ENCODE measurements at regions of chr2 and their contacts with region 1.

Region 1: GRCh38 chr2:231104115-231104713 is 20.6 kb downstream of the HTR2B start:
- DNase-seq: no peak

Region 2: DNA sequence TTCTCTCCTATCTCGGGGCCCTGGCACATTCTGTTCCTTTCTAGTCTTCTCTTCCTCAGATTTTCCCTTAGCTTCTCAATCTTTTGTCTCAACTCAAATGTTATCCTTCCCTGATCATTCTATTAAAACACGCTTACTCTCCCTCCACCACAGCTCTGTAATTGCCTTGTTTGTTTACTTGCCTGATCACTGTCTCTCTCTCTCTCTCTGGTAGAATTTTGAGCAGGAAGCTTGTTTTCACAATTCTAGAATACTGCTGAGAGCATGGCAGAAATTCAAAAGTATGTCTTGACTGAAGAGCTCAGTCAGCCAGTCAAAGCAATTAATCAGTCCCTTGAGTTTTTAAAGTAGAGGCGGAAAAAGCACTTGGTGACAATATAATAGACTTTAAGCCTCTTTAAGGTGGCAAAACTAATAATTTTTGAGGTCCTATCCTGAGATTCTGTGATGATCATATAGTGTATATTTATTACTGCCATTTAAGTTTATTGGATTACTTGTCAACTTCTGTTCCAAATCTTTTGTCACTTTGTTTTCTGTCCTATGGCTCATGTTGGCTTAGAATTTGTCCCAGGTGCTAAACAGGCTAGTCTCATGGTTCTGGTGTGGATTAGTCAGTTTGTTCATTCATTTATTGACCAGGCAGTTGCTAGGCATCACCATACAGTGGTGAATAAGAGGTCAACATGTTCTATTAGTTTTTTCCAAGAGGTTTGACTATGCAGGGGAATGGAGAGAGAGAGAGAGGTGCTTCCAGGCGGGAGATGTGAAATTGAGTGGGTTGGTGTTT is 45.3 kb before region 1 on chr2:
- intact Hi-C with region 1: no loop called
- DNase-seq: no peak

Region 3: GRCh38 chr2:231191896-231192872 is 88.0 kb after region 1 on chr2:
- intact Hi-C with region 1: loop called in 1 of 2 experiments (anchors 5 kb)
- DNase-seq: peak; percentile 95

Region 4: GRCh38 chr2:231227309-231228162 is 123.3 kb after region 1 on chr2:
- intact Hi-C with region 1: loop called in 1 of 2 experiments (anchors 5 kb)
- DNase-seq: no peak

Region 5: GRCh38 chr2:231290321-231291015 is 186.3 kb after region 1 on chr2:
- intact Hi-C with region 1: no loop called
- DNase-seq: no peak

Region 6: GRCh38 chr2:231378026-231378722 is 274.0 kb after region 1 on chr2:
- intact Hi-C with region 1: no loop called
- DNase-seq: no peak

Region 7: GRCh38 chr2:231399853-231400680 is 295.9 kb after region 1 on chr2:
- intact Hi-C with region 1: loop called in 1 of 2 experiments (anchors 10 kb)
- DNase-seq: no peak

Region 8: DNA sequence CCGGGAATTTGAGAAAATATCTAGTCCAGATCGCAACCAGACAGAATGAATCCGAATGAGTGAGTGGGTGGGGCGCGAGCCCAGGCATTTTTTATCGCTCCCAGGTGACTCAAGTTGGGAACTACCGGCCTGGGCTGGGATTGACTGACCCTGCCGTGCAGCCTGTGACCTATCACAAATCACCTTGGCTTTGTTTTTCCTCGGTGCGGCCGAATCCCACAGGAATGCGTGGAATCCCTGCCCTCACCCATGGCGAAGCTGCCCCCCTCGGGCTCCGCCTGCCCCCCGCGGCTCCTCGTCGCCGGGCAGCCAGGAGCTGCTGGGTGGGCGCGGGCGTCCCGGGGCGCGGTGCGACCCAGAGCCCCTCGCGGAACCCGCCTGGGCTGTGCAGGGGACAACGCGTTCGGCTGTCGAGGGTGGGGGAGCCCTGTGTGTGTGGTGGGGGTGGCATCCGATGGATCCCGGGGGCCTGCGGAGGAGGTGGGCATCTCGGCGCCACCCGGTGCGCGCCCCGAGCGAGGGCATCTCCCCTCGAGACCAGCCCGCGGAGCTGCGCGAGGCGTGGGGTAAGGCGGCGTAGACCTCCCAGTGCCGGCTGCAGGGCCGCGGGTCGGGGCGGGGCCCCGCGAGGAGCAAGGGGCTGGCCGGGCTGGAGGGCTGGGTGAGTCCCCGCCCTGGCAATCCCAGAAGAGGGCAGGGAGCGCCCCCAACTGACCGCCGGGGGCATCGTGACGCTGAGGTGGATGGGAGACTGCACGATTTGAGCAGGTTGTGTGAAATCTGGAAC is 307.8 kb after region 1 on chr2:
- intact Hi-C with region 1: loop called (anchors 10 kb)
- DNase-seq: peak; percentile 96